Motor neuron (in vitro differentiated cells): ENCODE measurements at regions of chr12 and their contacts with region 1.

Region 1: GRCh38 chr12:78002878-78003277 is 172.2 kb downstream of the NAV3 start:
- ATAC-seq: peak in 3 of 8 experiments; percentile 37 to 67 (median 50)
- H3K4me3 ChIP-seq: no peak overlapping the region
- H3K27ac ChIP-seq: no peak overlapping the region
- H3K4me1 ChIP-seq: no peaks in the 10 kb centered on the region

Region 2: DNA sequence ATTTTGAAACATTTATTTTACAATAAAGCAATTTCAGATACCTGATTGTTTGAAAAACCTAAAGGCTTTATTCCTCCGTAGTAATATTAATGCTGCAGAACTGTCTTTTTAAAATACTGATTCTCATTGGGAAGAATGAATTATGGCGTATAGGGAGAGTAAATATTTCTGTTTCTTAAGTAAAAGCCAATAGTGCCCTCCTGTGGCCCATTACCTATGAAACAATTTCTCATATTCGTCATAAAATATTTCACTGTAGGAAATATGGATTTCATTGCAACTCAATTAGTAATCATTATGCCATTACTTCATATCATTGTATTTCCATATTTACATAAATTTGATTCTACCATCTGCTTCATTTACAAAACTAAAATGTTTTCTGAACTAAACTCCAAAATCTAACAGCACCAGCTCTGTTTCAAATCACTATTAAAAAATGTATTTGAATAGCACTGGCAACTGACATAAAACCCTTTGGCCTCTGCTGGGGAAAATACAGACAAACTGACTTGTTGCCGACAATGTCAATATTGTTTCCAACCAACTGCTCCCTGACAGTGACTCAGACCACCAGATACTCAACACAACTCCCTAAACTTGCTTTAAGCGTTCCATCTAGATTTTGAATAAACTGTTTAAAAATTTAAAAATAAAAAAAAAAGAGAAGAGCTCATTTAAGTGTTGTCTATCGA is 118.1 kb after region 1 on chr12:
- in situ Hi-C with region 1: loop called in 2 of 9 experiments (anchors 10 kb)
- ATAC-seq: peak in 3 of 8 experiments; percentile 25 to 59 (median 36)
- H3K4me3 ChIP-seq: no peak overlapping the region
- H3K27ac ChIP-seq: no peak overlapping the region
- H3K4me1 ChIP-seq: peaks cover 0 to 5% of the 10 kb centered on the region in 2 donors